Panc1 (cell line): ENCODE measurements at regions of chr3 and their contacts with region 1.

Region 1: GRCh38 chr3:67113802-67114407 is 115.8 kb downstream of the KBTBD8 start:
- DNase-seq: peak; percentile 74
- ATAC-seq: peak; percentile 80
- H3K4me3 ChIP-seq: no peak overlapping the region
- H3K27ac ChIP-seq: no peak overlapping the region
- H3K4me1 ChIP-seq: no peaks in the 10 kb centered on the region
- H3K27me3 ChIP-seq: no peaks in the 10 kb centered on the region
- CTCF ChIP-seq: peak; percentile 82

Region 2: GRCh38 chr3:67090474-67090873 is 23.4 kb before region 1 on chr3:
- CTCF ChIA-PET with region 1: no interaction called
- POLR2A ChIA-PET with region 1: no interaction called
- in situ Hi-C with region 1: no loop called
- intact Hi-C with region 1: no loop called
- DNase-seq: no peak
- ATAC-seq: no peak
- H3K4me3 ChIP-seq: no peak overlapping the region
- H3K27ac ChIP-seq: no peak overlapping the region
- H3K4me1 ChIP-seq: no peaks in the 10 kb centered on the region
- H3K27me3 ChIP-seq: no peaks in the 10 kb centered on the region
- CTCF ChIP-seq: no peak

Region 3: DNA sequence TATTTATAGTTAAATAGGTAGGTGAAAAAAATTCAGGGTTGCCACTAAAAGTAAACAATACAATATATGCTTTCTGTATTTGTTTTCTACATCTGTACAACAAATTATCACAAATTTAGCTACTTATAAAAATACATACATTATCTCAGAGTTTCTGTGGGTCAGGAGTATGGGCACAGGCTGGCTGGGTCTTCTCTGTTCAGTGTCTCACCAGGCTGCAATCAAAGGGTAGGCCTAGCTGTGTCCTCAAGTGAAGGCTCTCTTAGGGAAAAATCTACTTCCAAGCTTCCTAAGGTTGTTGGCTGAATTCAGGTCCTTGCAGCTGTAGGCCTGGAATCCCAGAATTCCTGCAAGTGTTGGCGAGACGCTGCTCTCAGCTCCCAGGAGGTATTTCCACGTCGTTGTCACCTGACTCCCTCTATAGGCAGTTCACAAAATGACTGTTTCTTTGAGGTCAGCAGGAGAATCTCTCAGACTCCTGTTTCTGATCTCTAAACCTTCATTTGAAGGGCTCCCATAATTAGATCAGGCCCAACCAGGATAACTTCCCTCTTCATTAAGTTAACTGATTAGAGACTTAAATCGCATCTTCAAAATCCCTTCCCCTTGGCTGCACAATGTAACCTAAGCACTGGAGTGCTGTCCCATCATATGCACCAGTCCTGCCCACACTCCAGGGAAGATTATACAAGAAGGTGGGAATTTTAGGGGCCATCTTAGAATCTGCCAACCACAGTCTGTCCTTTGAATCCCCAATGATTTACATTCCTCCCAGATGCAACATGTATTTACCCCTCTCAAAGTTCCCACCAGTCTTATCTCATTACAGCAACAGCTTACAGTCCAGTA is 243.9 kb after region 1 on chr3:
- CTCF ChIA-PET with region 1: no interaction called
- POLR2A ChIA-PET with region 1: no interaction called
- in situ Hi-C with region 1: no loop called
- intact Hi-C with region 1: loop called (anchors 5 kb)
- DNase-seq: peak; percentile 18
- ATAC-seq: 0 out of 2 replicates have a peak, but pooled peaks have one; percentile 65
- H3K4me3 ChIP-seq: no peak overlapping the region
- H3K27ac ChIP-seq: no peak overlapping the region
- H3K4me1 ChIP-seq: no peaks in the 10 kb centered on the region
- H3K27me3 ChIP-seq: no peaks in the 10 kb centered on the region
- CTCF ChIP-seq: peak; percentile 65